HepG2 (cell line): ENCODE measurements at regions of chr10 and their contacts with region 1.

Region 1: GRCh38 chr10:37937864-37938263 is 38.6 kb downstream of the ZNF25 start:
- DNase-seq: no peak
- ATAC-seq: peak; percentile 64
- H3K4me3 ChIP-seq: no peak overlapping the region
- H3K27ac ChIP-seq: no peak overlapping the region
- H3K4me1 ChIP-seq: no peaks in the 10 kb centered on the region
- H3K27me3 ChIP-seq: peaks cover 3% of the 10 kb centered on the region in 2 experiments; a peak in 2 of 5 replicates
- CTCF ChIP-seq: peak; percentile 34; the same call in 1 of the 2 replicates
- EP300 ChIP-seq: no peak
- POLR2A ChIP-seq: no peak
- RAD21 ChIP-seq: no peak

Region 2: GRCh38 chr10:37754538-37755323 is 183.1 kb before region 1 on chr10:
- CTCF ChIA-PET with region 1: no interaction called
- POLR2A ChIA-PET with region 1: no interaction called
- in situ Hi-C with region 1: no loop called
- intact Hi-C with region 1: loop called (anchors 10 kb)
- DNase-seq: peak; percentile 64
- ATAC-seq: peak; percentile 97
- H3K4me3 ChIP-seq: no peak overlapping the region
- H3K27ac ChIP-seq: no peak overlapping the region
- H3K4me1 ChIP-seq: peaks cover 11% of the 10 kb centered on the region
- H3K27me3 ChIP-seq: no peaks in the 10 kb centered on the region
- CTCF ChIP-seq: peak; percentile 87
- EP300 ChIP-seq: no peak
- POLR2A ChIP-seq: no peak
- RAD21 ChIP-seq: peak; percentile 71

Region 3: GRCh38 chr10:37860494-37861190 is 77.2 kb before region 1 on chr10:
- CTCF ChIA-PET with region 1: no interaction called
- POLR2A ChIA-PET with region 1: no interaction called
- in situ Hi-C with region 1: no loop called
- intact Hi-C with region 1: no loop called
- DNase-seq: peak; percentile 27
- ATAC-seq: no peak
- H3K4me3 ChIP-seq: no peak overlapping the region
- H3K27ac ChIP-seq: no peak overlapping the region
- H3K4me1 ChIP-seq: peaks cover 40% of the 10 kb centered on the region
- H3K27me3 ChIP-seq: no peaks in the 10 kb centered on the region; a peak in 2 of 5 replicates
- CTCF ChIP-seq: no peak
- EP300 ChIP-seq: no peak
- POLR2A ChIP-seq: no peak
- RAD21 ChIP-seq: no peak

Region 4: GRCh38 chr10:37948210-37948609 is 10.3 kb after region 1 on chr10:
- CTCF ChIA-PET with region 1: no interaction called
- POLR2A ChIA-PET with region 1: no interaction called
- in situ Hi-C with region 1: no loop called
- intact Hi-C with region 1: no loop called
- DNase-seq: no peak
- ATAC-seq: no peak
- H3K4me3 ChIP-seq: no peak overlapping the region
- H3K27ac ChIP-seq: no peak overlapping the region
- H3K4me1 ChIP-seq: no peaks in the 10 kb centered on the region
- H3K27me3 ChIP-seq: no peaks in the 10 kb centered on the region
- CTCF ChIP-seq: no peak
- EP300 ChIP-seq: no peak
- POLR2A ChIP-seq: no peak
- RAD21 ChIP-seq: no peak

Region 5: DNA sequence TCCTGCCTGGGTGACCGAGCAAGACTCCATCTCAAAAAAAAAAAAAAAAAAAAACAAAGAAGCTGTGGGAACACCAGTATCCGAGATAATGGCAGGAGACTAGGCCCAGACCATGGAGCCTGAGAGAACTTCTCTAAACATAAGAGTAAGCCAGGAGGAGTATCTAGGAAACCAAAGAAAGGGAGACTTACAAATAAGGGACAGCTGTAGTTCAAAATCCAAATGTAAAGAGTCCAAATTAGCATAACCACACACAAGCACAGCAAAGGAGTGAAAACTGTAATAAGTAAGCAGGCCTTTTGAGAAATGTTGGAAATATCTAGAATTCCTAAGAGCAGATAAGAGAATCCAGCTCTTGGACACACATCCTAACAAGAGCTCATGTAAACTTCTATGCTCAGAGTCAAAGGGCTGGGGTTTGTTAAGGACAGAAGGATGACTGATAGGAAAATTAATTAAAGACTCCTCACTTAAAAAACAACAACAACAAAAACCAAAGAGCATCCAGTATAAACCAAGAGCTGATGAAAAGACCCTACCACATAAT is 22.8 kb after region 1 on chr10:
- CTCF ChIA-PET with region 1: no interaction called
- POLR2A ChIA-PET with region 1: no interaction called
- in situ Hi-C with region 1: no loop called
- intact Hi-C with region 1: loop called (anchors 1 kb)
- DNase-seq: no peak
- ATAC-seq: no peak
- H3K4me3 ChIP-seq: no peak overlapping the region
- H3K27ac ChIP-seq: no peak overlapping the region
- H3K4me1 ChIP-seq: no peaks in the 10 kb centered on the region
- H3K27me3 ChIP-seq: no peaks in the 10 kb centered on the region
- CTCF ChIP-seq: no peak
- EP300 ChIP-seq: no peak
- POLR2A ChIP-seq: no peak
- RAD21 ChIP-seq: no peak

Region 6: GRCh38 chr10:38010119-38010903 is 72.4 kb after region 1 on chr10 and contains the start of gene ZNF33A:
- CTCF ChIA-PET with region 1: no interaction called
- POLR2A ChIA-PET with region 1: no interaction called
- in situ Hi-C with region 1: no loop called
- intact Hi-C with region 1: no loop called
- DNase-seq: peak; percentile 90
- ATAC-seq: peak; percentile 97
- H3K4me3 ChIP-seq: peak within 1 kb of the TSS; percentile 70 to 79 (median 78)
- H3K27ac ChIP-seq: peak within 1 kb of the TSS; percentile 91
- H3K4me1 ChIP-seq: peaks cover 17% of the 10 kb centered on the region
- H3K27me3 ChIP-seq: no peaks in the 10 kb centered on the region
- CTCF ChIP-seq: no peak
- EP300 ChIP-seq: no peak
- POLR2A ChIP-seq: peak in 1 of 2 experiments; percentile 79; a peak in 2 of 4 replicates
- RAD21 ChIP-seq: no peak
- total RNA-seq, gene ZNF33A: 22.5 and 35.5 TPM in 2 replicates